SK-N-SH (cell line): ENCODE measurements at regions of chr19 and their contacts with region 1.

Region 1: DNA sequence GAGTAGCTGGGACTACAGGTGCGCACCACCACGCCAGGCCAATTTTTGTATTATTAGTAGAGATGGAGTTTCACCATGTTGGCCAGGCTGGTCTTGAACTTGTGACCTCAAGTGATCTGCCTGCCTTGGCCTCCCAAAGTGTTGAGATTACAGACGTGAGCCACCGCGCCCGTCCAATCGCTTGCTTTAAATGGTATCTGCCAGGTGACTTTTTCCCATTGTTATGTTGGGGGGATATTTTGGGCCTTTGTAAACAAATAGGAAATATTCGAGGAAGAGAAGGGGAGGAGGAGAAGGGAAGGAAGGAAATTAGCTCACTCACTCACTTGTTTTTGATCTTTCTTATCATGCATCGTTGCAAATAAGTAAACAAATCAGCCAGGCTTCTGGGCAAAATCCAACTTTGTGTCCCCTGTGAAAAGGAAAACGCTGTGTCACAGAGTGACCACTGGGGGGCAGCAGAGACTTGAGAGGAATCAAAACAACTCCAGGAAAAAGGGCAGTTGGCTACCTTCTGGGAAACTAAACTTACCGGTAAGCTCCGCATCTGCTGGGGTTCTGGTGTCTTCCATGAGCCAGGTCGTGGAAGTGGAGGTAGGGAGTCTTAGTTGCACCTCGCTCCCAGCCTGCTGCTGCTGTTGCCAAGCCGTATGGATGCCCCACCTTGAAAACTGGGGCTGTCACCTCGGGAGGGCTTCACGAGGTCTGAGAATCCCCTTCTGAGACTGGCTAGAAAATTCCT is 9.3 kb upstream of the RANBP3 start:
- DNase-seq: peak; percentile 79
- H3K4me3 ChIP-seq: peak overlapping the region in 1 of 2 experiments; percentile 9; a peak in 1 of 4 replicates
- H3K27ac ChIP-seq: no peak overlapping the region
- H3K4me1 ChIP-seq: peaks cover 3 to 9% of the 10 kb centered on the region in 2 experiments; a peak in 2 of 4 replicates
- H3K27me3 ChIP-seq: no peaks in the 10 kb centered on the region
- CTCF ChIP-seq: peak; percentile 92
- EP300 ChIP-seq: no peak
- RAD21 ChIP-seq: peak; percentile 94

Region 2: GRCh38 chr19:5743630-5744029 is 243.6 kb before region 1 on chr19:
- CTCF ChIA-PET with region 1: no interaction called
- POLR2A ChIA-PET with region 1: no interaction called
- DNase-seq: no peak
- H3K4me3 ChIP-seq: no peak overlapping the region
- H3K27ac ChIP-seq: no peak overlapping the region
- H3K4me1 ChIP-seq: no peaks in the 10 kb centered on the region
- H3K27me3 ChIP-seq: peaks cover 14% of the 10 kb centered on the region; the same call in 1 of the 2 replicates
- CTCF ChIP-seq: no peak
- EP300 ChIP-seq: no peak
- RAD21 ChIP-seq: no peak

Region 3: GRCh38 chr19:6000228-6000847 is 13.1 kb after region 1 on chr19:
- CTCF ChIA-PET with region 1: interaction called, 13 read pairs
- POLR2A ChIA-PET with region 1: no interaction called
- DNase-seq: no peak
- H3K4me3 ChIP-seq: no peak overlapping the region
- H3K27ac ChIP-seq: no peak overlapping the region
- H3K4me1 ChIP-seq: peaks cover 0 to 4% of the 10 kb centered on the region in 2 experiments; a peak in 1 of 4 replicates
- H3K27me3 ChIP-seq: no peaks in the 10 kb centered on the region
- CTCF ChIP-seq: no peak
- EP300 ChIP-seq: no peak
- RAD21 ChIP-seq: no peak

Region 4: GRCh38 chr19:6014551-6015135 is 27.4 kb after region 1 on chr19:
- CTCF ChIA-PET with region 1: interaction called, 448 read pairs
- POLR2A ChIA-PET with region 1: no interaction called
- DNase-seq: peak; percentile 20
- H3K4me3 ChIP-seq: no peak overlapping the region
- H3K27ac ChIP-seq: no peak overlapping the region
- H3K4me1 ChIP-seq: peaks cover 0 to 8% of the 10 kb centered on the region in 2 experiments; a peak in 1 of 4 replicates
- H3K27me3 ChIP-seq: no peaks in the 10 kb centered on the region
- CTCF ChIP-seq: no peak
- EP300 ChIP-seq: no peak
- RAD21 ChIP-seq: no peak

Region 5: GRCh38 chr19:6038634-6039405 is 51.6 kb after region 1 on chr19:
- CTCF ChIA-PET with region 1: interaction called, 12 read pairs
- POLR2A ChIA-PET with region 1: no interaction called
- DNase-seq: no peak
- H3K4me3 ChIP-seq: no peak overlapping the region
- H3K27ac ChIP-seq: no peak overlapping the region
- H3K4me1 ChIP-seq: no peaks in the 10 kb centered on the region
- H3K27me3 ChIP-seq: no peaks in the 10 kb centered on the region
- CTCF ChIP-seq: no peak
- EP300 ChIP-seq: no peak
- RAD21 ChIP-seq: no peak